Activated CD8-positive, alpha-beta memory T cell treated with anti-CD3 and anti-CD28 coated beads, Interleukin-2, amount 10 ng/mL, durations not matched to agents 7 days and 5 days (primary cell): ENCODE measurements at regions of chr5 and their contacts with region 1.

Region 1: GRCh38 chr5:43484106-43484849 is 613 bp upstream of the TMEM267 start:
- DNase-seq: peak; percentile 94
- ATAC-seq: peak; percentile 78
- H3K4me3 Mint-ChIP-seq: peak overlapping the region; percentile 98
- H3K27ac Mint-ChIP-seq: peak overlapping the region; percentile 100
- H3K4me1 Mint-ChIP-seq: peaks cover 45% of the 10 kb centered on the region
- H3K27me3 Mint-ChIP-seq: no peaks in the 10 kb centered on the region

Region 2: GRCh38 chr5:43066799-43067741 is 417.2 kb before region 1 on chr5:
- CTCF ChIA-PET with region 1: interaction called, 11 read pairs
- DNase-seq: peak; percentile 93
- ATAC-seq: peak; percentile 63
- H3K4me3 Mint-ChIP-seq: peak overlapping the region; percentile 99
- H3K27ac Mint-ChIP-seq: peak overlapping the region; percentile 97
- H3K4me1 Mint-ChIP-seq: peaks cover 41% of the 10 kb centered on the region
- H3K27me3 Mint-ChIP-seq: no peaks in the 10 kb centered on the region

Region 3: GRCh38 chr5:43120720-43121564 is 363.3 kb before region 1 on chr5 and contains the start of gene ZNF131:
- CTCF ChIA-PET with region 1: interaction called, 16 read pairs
- DNase-seq: peak; percentile 97
- ATAC-seq: peak; percentile 88
- H3K4me3 Mint-ChIP-seq: peak within 1 kb of the TSS; percentile 87
- H3K27ac Mint-ChIP-seq: peak within 1 kb of the TSS; percentile 93
- H3K4me1 Mint-ChIP-seq: peaks cover 38% of the 10 kb centered on the region
- H3K27me3 Mint-ChIP-seq: no peaks in the 10 kb centered on the region
- total RNA-seq, gene ZNF131: 39.9 to 56.2 TPM

Region 4: DNA sequence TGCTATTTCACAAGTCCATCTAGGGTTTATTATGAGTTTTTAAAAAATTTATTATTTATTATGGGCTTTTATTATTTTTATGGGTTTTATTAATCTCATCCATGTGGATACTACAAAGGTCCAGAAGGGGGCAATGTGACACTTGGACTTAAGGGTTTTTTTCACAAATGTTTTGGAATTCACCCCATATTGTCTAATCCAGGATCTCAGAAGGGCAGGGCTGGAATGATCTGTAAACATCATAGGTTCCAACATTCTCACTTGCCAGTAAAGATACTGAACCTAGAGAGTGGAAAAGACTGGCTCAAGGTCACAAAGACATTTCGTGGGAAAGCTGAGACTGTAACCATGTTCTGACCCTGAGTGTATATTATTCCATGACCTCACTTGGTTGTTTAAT is 256.6 kb before region 1 on chr5:
- CTCF ChIA-PET with region 1: no interaction called
- DNase-seq: no peak
- ATAC-seq: no peak
- H3K4me3 Mint-ChIP-seq: no peak overlapping the region
- H3K27ac Mint-ChIP-seq: no peak overlapping the region
- H3K4me1 Mint-ChIP-seq: no peaks in the 10 kb centered on the region
- H3K27me3 Mint-ChIP-seq: no peaks in the 10 kb centered on the region

Region 5: GRCh38 chr5:43396762-43397304 is 87.4 kb before region 1 on chr5:
- CTCF ChIA-PET with region 1: interaction called, 19 read pairs
- DNase-seq: peak; percentile 79
- ATAC-seq: peak; percentile 98
- H3K4me3 Mint-ChIP-seq: peak overlapping the region; percentile 96
- H3K27ac Mint-ChIP-seq: peak overlapping the region; percentile 99
- H3K4me1 Mint-ChIP-seq: peaks cover 29% of the 10 kb centered on the region
- H3K27me3 Mint-ChIP-seq: no peaks in the 10 kb centered on the region

Region 6: GRCh38 chr5:43461066-43461465 is 23.2 kb before region 1 on chr5:
- CTCF ChIA-PET with region 1: no interaction called
- DNase-seq: no peak
- ATAC-seq: no peak
- H3K4me3 Mint-ChIP-seq: no peak overlapping the region
- H3K27ac Mint-ChIP-seq: no peak overlapping the region
- H3K4me1 Mint-ChIP-seq: no peaks in the 10 kb centered on the region
- H3K27me3 Mint-ChIP-seq: no peaks in the 10 kb centered on the region

Region 7: DNA sequence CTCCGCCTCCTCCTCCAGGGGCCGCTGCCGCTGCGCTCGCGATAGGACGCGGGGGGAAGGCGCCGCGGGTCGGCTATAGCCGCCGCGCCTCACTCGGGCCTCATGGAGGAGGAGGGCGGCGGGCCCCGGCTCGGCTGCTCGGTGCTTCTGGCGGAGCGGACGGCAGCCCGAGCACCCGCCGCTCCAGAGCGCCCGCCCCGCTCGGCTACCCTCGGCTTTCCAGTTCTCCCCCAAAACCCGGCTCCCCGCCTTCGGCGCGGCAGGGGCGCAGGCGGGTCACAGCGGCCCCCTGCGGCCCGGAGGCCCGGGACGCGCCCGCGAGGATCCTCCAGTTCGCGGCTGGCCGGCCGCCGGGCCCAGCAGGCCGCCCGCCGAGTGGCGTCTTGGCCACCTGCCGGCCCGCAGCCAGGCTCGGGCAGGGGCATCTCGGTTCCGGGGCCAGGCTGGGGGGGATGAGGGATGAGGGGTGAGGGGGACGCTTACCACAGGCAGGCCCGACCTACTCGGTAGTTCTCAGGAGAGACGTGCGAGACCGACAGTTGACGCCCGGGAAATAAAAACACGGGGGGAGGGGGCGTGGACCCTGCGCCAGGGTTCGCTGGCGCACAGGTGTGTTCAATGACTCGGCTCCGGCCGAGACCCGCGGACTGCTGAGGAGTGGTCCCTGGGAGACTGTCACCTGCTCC is 72.7 kb after region 1 on chr5 and contains the start of gene PAIP1:
- CTCF ChIA-PET with region 1: interaction called, 11 read pairs
- DNase-seq: peak; percentile 90
- ATAC-seq: peak; percentile 91
- H3K4me3 Mint-ChIP-seq: peak within 1 kb of the TSS; percentile 77
- H3K27ac Mint-ChIP-seq: peak within 1 kb of the TSS; percentile 91
- H3K4me1 Mint-ChIP-seq: peaks cover 15% of the 10 kb centered on the region
- H3K27me3 Mint-ChIP-seq: peaks cover 9% of the 10 kb centered on the region
- total RNA-seq, gene PAIP1: 34.0 to 42.9 TPM

Region 8: DNA sequence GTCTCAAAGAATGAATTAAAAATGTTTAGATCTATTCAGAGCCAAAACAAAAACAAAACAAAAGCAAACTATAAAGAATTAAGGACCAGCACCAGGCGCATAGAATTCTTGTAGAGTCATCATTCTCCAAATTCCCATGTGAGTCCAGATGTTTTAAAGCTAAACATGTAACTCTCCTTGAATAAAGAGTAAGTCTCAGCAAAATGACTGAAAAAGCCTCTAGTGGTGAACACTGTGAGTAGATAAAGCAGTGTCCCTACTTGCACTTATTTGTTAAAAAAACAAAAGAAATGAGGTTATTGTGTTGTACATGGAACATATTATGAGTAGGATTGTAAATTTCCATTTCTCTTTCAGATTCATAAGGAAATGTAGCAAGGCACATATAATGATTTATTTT is 162.7 kb after region 1 on chr5:
- CTCF ChIA-PET with region 1: no interaction called
- DNase-seq: no peak
- ATAC-seq: no peak
- H3K4me3 Mint-ChIP-seq: no peak overlapping the region
- H3K27ac Mint-ChIP-seq: no peak overlapping the region
- H3K4me1 Mint-ChIP-seq: no peaks in the 10 kb centered on the region
- H3K27me3 Mint-ChIP-seq: no peaks in the 10 kb centered on the region